CD4-positive, alpha-beta memory T cell (primary cell): ENCODE measurements at regions of chr10 and their contacts with region 1.

Region 1: DNA sequence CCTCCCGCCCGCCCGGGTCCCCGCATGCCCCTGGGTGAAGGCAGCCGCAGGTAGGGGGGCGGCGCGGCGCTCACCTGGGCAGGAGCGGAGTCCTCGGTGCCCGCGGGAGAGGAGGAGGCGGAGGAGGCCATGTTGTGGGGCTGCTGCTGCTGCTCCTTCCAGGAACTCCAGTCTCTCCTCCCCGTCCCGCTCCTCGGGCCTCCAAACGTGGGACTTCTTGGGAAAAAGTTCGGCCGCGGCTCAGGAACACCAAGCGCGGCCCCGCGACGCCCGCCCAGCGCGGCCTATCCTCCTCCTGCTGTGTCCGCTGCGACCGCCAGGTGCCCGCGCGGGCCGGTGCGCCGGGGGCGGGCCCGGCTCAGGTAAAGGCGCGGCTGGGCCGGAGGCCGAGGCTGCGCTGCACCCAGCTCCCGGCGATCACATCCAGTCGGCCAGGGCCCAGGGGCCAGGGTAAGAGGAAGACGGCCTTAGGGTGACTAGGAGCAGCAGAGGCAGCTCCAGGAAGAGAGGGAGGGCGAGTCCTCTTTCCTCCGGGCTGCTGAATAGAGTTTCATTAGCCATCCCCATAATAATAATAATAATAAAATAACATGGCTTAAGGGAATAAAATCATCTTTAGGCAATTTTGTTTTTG is 45.0 kb upstream of the CDK1 start:
- DNase-seq: peak; percentile 50 to 67 (median 55)
- H3K4me3 ChIP-seq: peak overlapping the region in 1 of 2 donors; percentile 70
- H3K4me3 Mint-ChIP-seq: peak overlapping the region; percentile 65 to 100 (median 84)
- H3K27ac ChIP-seq: peak overlapping the region; percentile 72
- H3K27ac Mint-ChIP-seq: peak overlapping the region in 6 of 7 donors; percentile 72 to 99 (median 88)
- H3K4me1 ChIP-seq: peaks cover 47% of the 10 kb centered on the region
- H3K4me1 Mint-ChIP-seq: peaks cover 24 to 41% (median 35%) of the 10 kb centered on the region in 4 donors
- H3K27me3 ChIP-seq: no peaks in the 10 kb centered on the region
- H3K27me3 Mint-ChIP-seq: no peaks in the 10 kb centered on the region

Region 2: GRCh38 chr10:60666221-60666620 is 67.1 kb before region 1 on chr10:
- CTCF ChIA-PET with region 1: no interaction called
- POLR2A ChIA-PET with region 1: interaction called, 3 read pairs
- intact Hi-C with region 1: loop called (anchors 5 kb)
- DNase-seq: no peak
- H3K4me3 ChIP-seq: no peak overlapping the region
- H3K4me3 Mint-ChIP-seq: peak overlapping the region in 1 of 8 donors; percentile 22
- H3K27ac ChIP-seq: no peak overlapping the region
- H3K27ac Mint-ChIP-seq: peak overlapping the region in 2 of 7 donors; percentile 31 to 57
- H3K4me1 ChIP-seq: peaks cover 22% of the 10 kb centered on the region
- H3K4me1 Mint-ChIP-seq: peaks cover 38 to 75% (median 48%) of the 10 kb centered on the region in 4 donors
- H3K27me3 ChIP-seq: no peaks in the 10 kb centered on the region
- H3K27me3 Mint-ChIP-seq: no peaks in the 10 kb centered on the region

Region 3: DNA sequence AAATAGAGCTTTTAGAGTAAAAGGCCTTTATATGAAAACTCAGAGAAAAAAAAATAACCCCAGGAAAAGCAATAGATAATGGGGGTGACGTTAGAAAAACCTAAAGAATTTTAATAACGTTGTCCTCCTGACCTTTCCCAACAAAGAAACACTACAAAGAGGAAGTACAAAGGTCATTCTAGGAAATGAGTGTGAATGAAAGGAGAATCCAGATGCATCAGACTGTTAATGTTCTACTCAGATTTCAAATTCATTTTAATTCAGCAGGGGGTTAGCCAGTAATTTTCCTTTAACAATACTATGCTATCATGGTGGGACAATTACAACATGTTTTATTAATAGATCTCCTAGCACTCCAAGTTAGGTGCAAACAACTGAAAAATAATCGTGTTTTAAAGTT is 28.8 kb before region 1 on chr10:
- CTCF ChIA-PET with region 1: interaction called, 7 read pairs
- POLR2A ChIA-PET with region 1: interaction called, 21 read pairs
- intact Hi-C with region 1: loop called (anchors 1 kb)
- DNase-seq: no peak
- H3K4me3 ChIP-seq: no peak overlapping the region
- H3K4me3 Mint-ChIP-seq: peak overlapping the region in 2 of 8 donors; percentile 3 to 49
- H3K27ac ChIP-seq: no peak overlapping the region
- H3K27ac Mint-ChIP-seq: peak overlapping the region in 4 of 7 donors; percentile 9 to 89 (median 51)
- H3K4me1 ChIP-seq: peaks cover 44% of the 10 kb centered on the region
- H3K4me1 Mint-ChIP-seq: peaks cover 46 to 65% (median 50%) of the 10 kb centered on the region in 4 donors
- H3K27me3 ChIP-seq: no peaks in the 10 kb centered on the region
- H3K27me3 Mint-ChIP-seq: no peaks in the 10 kb centered on the region

Region 4: DNA sequence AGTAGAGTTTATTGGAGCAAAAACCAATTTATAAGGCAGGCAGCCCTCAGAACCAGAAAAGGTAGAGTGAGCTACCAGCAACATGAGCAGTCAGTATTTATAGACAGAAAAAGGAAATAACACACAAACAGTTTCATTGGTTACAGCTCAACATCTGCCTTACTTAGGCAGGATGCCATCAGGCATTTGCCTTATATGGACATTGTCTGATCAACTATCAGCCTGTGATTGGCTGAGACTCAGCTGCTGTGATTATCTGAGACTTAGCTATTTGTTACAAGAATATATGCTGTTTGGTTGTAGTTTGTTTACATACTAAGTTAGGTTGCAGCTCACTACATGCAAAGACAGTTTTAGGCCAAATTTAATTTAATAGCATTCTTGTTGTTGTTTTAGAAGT is 15.5 kb before region 1 on chr10:
- CTCF ChIA-PET with region 1: interaction called, 4 read pairs
- POLR2A ChIA-PET with region 1: interaction called, 29 read pairs
- intact Hi-C with region 1: loop called (anchors 2 kb)
- DNase-seq: no peak
- H3K4me3 ChIP-seq: no peak overlapping the region
- H3K4me3 Mint-ChIP-seq: peak overlapping the region in 1 of 8 donors; percentile 40
- H3K27ac ChIP-seq: no peak overlapping the region
- H3K27ac Mint-ChIP-seq: no peak overlapping the region
- H3K4me1 ChIP-seq: peaks cover 63% of the 10 kb centered on the region
- H3K4me1 Mint-ChIP-seq: peaks cover 48 to 70% (median 53%) of the 10 kb centered on the region in 4 donors
- H3K27me3 ChIP-seq: no peaks in the 10 kb centered on the region
- H3K27me3 Mint-ChIP-seq: no peaks in the 10 kb centered on the region

Region 5: DNA sequence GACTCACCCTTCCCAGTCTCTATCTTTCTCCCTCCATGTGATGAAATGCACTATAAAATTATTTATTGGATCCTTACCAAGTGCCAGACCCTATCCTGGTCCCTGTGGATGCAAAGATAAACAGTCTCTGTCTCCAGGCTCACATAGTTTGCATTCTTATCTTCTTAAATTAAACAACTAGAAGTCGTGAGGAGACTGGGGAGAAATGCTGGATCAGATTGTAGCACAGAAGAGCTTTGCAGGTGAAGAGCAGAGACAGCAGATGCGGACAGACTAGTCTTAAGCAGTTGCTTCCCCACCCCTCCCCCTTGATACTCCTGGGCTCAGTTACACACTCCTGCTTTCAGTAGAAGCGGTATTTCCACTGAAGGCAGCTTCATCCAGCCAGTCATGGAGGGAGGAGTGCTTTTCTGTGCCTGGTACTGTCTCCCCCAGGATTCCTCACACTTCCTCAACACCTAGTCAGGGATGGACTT is 24.2 kb after region 1 on chr10:
- CTCF ChIA-PET with region 1: no interaction called
- POLR2A ChIA-PET with region 1: no interaction called
- intact Hi-C with region 1: no loop called
- DNase-seq: no peak
- H3K4me3 ChIP-seq: no peak overlapping the region
- H3K4me3 Mint-ChIP-seq: no peak overlapping the region
- H3K27ac ChIP-seq: no peak overlapping the region
- H3K27ac Mint-ChIP-seq: no peak overlapping the region
- H3K4me1 ChIP-seq: no peaks in the 10 kb centered on the region
- H3K4me1 Mint-ChIP-seq: no peaks in the 10 kb centered on the region
- H3K27me3 ChIP-seq: no peaks in the 10 kb centered on the region
- H3K27me3 Mint-ChIP-seq: peaks cover 5 to 13% of the 10 kb centered on the region in 2 donors

Region 6: DNA sequence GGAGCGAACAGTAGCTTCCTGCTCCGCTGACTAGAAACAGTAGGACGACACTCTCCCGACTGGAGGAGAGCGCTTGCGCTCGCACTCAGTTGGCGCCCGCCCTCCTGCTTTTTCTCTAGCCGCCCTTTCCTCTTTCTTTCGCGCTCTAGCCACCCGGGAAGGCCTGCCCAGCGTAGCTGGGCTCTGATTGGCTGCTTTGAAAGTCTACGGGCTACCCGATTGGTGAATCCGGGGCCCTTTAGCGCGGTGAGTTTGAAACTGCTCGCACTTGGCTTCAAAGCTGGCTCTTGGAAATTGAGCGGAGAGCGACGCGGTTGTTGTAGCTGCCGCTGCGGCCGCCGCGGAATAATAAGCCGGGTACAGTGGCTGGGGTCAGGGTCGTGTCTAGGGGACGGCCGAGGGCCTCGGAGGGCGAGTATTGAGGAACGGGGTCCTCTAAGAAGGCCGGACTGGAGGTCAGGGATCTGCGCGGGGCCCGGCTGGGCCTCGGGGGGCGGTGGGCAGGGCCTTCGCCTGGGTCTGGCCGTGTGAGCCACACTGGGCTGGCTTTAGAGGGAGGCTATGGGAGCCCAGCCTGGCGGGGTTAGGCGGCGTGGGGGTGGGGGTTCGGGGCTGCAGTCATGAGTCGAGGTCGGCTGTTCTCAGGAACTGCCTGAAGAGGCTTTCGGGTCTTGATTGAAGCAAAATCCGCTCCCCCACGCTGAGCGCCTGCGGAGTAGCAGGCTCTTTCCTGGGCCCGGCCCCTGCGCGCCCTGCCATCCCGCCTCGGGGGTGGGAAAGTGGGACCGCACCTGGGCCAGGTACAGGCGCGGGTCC is 45.1 kb after region 1 on chr10 and contains the start of gene CDK1:
- CTCF ChIA-PET with region 1: no interaction called
- POLR2A ChIA-PET with region 1: interaction called, 3 read pairs
- intact Hi-C with region 1: loop called (anchors 2 kb)
- DNase-seq: peak; percentile 94 to 97 (median 95)
- H3K4me3 ChIP-seq: peak within 1 kb of the TSS; percentile 64 to 79
- H3K4me3 Mint-ChIP-seq: peak within 1 kb of the TSS; percentile 93 to 99 (median 96)
- H3K27ac ChIP-seq: peak within 1 kb of the TSS; percentile 32
- H3K27ac Mint-ChIP-seq: peak within 1 kb of the TSS; percentile 67 to 93 (median 88)
- H3K4me1 ChIP-seq: peaks cover 33% of the 10 kb centered on the region
- H3K4me1 Mint-ChIP-seq: peaks cover 15 to 33% (median 20%) of the 10 kb centered on the region in 4 donors
- H3K27me3 ChIP-seq: no peaks in the 10 kb centered on the region
- H3K27me3 Mint-ChIP-seq: peaks cover 2 to 4% of the 10 kb centered on the region in 2 donors
- total RNA-seq, gene CDK1: 1.3 to 1.6 TPM